Panc1 (cell line): ENCODE measurements at regions of chr15 and their contacts with region 1.

Region 1: DNA sequence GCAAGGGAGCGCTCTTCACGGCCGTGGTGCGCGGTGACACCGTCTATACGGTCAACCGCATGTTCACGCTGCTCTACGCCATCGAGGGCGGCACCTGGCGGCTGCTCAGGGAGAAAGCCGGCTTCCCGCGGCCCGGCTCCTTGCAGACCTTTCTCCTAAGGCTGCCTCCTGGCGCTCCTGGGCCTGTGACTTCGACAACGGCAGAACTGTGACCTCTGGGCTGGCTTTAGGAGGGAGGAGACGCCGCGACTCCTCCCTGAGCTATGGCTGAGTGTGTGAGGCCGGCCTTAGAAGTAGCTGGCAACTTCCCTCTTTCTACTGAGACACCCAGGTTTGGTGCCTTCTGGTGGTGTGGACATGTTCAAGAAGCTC is 1.4 kb downstream of the KBTBD13 start:
- DNase-seq: no peak
- ATAC-seq: peak; percentile 96
- H3K4me3 ChIP-seq: no peak overlapping the region
- H3K27ac ChIP-seq: no peak overlapping the region
- H3K4me1 ChIP-seq: no peaks in the 10 kb centered on the region; the same call in 1 of the 2 replicates
- H3K27me3 ChIP-seq: no peaks in the 10 kb centered on the region; the same call in 1 of the 2 replicates
- CTCF ChIP-seq: peak; percentile 87

Region 2: DNA sequence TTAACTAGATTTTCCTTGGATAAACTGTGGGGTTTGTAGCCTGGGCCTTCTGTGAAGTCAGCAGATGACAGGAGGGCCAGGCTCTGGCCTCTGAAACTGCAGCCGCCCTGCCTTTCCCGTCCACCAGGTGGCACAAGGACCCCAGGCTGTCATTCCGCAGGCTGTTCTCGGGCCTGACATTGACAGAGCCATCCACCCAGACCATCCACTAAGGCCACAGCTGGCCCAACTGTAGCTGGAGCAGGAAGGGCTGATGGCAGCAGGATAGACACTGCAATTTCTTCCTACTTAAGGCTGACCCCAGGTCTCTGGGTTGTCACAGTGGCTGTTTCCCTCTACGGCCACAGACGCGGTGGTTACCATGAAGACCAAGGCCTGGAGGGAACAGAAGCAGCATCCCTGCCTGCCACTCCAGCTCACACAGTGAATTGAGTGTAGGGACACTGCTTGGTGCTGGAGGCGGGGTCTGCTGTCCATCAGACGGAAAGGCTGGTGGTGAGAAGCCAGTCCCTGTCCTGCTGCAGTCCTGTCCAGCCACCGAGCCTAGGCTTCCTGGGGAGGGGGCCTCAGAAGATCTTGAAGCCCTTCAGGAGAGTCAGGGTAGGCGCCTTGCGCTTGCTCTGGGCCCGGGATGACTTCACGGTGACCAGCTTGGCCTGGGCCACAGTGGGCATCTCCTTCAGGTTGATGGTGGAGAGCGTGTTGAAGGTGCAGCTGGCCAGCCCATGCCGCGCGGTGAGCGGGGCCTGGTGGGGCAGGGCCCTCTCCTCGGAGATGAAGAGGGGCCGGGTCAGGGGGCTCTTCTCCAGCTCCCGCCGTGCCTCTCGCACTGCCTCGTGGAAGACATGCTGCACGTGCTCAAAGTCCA is 23.4 kb before region 1 on chr15:
- CTCF ChIA-PET with region 1: interaction called, 6 read pairs
- POLR2A ChIA-PET with region 1: interaction called, 4 read pairs
- in situ Hi-C with region 1: no loop called
- intact Hi-C with region 1: loop called (anchors 1 kb)
- DNase-seq: no peak
- ATAC-seq: peak; percentile 90
- H3K4me3 ChIP-seq: no peak overlapping the region
- H3K27ac ChIP-seq: no peak overlapping the region
- H3K4me1 ChIP-seq: peaks cover 11% of the 10 kb centered on the region
- H3K27me3 ChIP-seq: no peaks in the 10 kb centered on the region
- CTCF ChIP-seq: peak; percentile 96

Region 3: DNA sequence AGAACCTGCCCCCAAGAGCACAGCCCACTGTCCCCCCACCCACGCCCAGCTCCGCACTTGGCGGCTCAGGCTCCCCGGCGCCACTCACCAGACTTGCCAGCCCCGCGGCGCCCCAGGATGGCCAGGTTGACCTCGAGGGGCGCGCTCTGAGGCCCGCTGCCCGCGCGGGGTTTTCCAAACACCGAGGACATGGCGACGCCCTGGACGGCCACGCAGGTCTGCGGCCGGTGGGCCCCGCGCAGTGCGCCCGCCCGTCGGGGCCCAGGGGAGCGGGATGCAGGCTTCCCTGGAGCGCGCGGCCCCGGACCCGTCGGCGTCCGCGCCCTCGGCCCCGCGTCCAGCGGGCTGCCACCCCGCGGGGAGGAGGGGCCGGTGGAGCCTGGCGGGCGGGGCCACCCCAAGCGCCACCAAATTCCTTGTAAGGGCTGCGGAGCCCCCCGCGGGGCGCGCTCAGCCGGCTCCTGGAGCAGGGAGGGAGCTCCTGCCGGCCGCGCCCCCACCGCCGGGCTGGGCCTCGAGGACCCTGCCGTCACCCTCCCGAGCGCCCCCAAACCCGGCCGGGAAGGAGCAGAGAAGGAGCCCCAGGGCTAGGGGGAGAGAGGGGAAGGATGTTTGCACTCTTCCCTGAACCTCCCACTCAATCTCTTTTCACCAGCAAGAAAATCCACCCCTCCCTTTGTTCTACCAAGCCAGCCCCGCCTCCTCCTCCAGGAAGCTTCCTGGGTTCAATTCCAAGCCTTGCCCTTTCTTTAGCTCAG is 10.1 kb before region 1 on chr15 and contains the start of gene RASL12:
- CTCF ChIA-PET with region 1: interaction called, 4 read pairs
- POLR2A ChIA-PET with region 1: interaction called, 4 read pairs
- in situ Hi-C with region 1: no loop called
- intact Hi-C with region 1: loop called (anchors 1 kb)
- DNase-seq: no peak
- ATAC-seq: peak; percentile 53
- H3K4me3 ChIP-seq: peak within 1 kb of the TSS; percentile 23 to 32; a peak in 3 of 4 replicates
- H3K27ac ChIP-seq: no peak within 1 kb of the TSS
- H3K4me1 ChIP-seq: no peaks in the 10 kb centered on the region
- H3K27me3 ChIP-seq: peaks cover 6% of the 10 kb centered on the region; the same call in 1 of the 2 replicates
- CTCF ChIP-seq: no peak
- total RNA-seq, gene RASL12: 0.67 TPM